ENCODE measurements at regions of chr6 and their contacts with region 1.

Region 1: DNA sequence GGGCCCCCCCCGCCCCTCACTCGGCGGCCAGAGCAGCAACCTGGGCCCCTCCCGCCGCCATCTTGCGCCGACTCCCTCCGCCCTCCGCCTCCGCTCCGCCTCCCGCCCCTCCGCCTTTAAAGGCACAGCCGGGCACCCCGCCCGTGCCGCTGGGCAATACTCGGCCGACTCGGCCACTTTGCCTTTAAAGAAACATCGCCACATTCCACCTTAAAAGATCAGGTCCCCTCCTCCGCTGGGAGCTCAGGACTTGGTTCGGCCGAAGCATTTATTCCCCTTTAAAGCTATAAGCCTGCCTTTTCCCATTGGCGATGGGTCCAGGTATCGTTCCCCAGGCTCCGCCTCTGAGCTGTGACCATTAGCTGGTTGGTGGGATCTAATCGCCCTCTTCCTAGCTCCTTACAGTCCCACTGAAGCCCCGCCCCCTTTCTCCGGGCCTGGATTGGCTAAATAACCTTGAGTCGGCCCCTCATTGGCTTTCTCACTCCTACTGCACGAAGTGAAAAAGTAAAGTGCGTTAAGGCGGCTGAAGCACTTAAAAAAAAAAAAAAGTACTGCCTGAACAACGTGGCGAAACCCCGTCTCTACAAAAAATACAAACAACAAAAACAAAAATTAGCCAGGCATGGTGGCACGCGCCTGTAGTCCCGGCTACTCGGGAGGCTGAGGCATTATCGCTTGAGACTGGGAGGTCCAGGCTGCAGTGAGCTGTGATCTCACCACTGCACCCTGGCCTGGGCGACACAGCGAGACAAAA is at the start of gene ZBTB22:
- DNase-seq: peak; percentile 98
- ATAC-seq: peak; percentile 69
- H3K4me3 Mint-ChIP-seq: peak within 1 kb of the TSS; percentile 80
- H3K27ac Mint-ChIP-seq: peak within 1 kb of the TSS; percentile 93
- H3K4me1 Mint-ChIP-seq: peaks cover 70% of the 10 kb centered on the region
- H3K27me3 Mint-ChIP-seq: no peaks in the 10 kb centered on the region
- total RNA-seq, gene ZBTB22: 9.0 to 9.9 TPM

Region 2: GRCh38 chr6:33276864-33277662 is 40.8 kb before region 1 on chr6 and contains the start of gene B3GALT4:
- CTCF ChIA-PET with region 1: interaction called, 8 read pairs
- POLR2A ChIA-PET with region 1: interaction called, 10 read pairs
- intact Hi-C with region 1: loop called (anchors 1 to 5 kb)
- DNase-seq: peak; percentile 87
- ATAC-seq: peak; percentile 75
- H3K4me3 Mint-ChIP-seq: peak within 1 kb of the TSS; percentile 91
- H3K27ac Mint-ChIP-seq: peak within 1 kb of the TSS; percentile 92
- H3K4me1 Mint-ChIP-seq: peaks cover 39% of the 10 kb centered on the region
- H3K27me3 Mint-ChIP-seq: no peaks in the 10 kb centered on the region
- total RNA-seq, gene B3GALT4: 2.8 to 3.5 TPM

Region 3: GRCh38 chr6:33299237-33299944 is 18.5 kb before region 1 on chr6:
- CTCF ChIA-PET with region 1: interaction called, 13 read pairs
- POLR2A ChIA-PET with region 1: interaction called, 7 read pairs
- intact Hi-C with region 1: loop called in 1 of 2 experiments (anchors 1 kb)
- DNase-seq: peak; percentile 97
- ATAC-seq: peak; percentile 87
- H3K4me3 Mint-ChIP-seq: peak overlapping the region; percentile 80
- H3K27ac Mint-ChIP-seq: peak overlapping the region; percentile 98
- H3K4me1 Mint-ChIP-seq: peaks cover 28% of the 10 kb centered on the region
- H3K27me3 Mint-ChIP-seq: no peaks in the 10 kb centered on the region

Region 4: DNA sequence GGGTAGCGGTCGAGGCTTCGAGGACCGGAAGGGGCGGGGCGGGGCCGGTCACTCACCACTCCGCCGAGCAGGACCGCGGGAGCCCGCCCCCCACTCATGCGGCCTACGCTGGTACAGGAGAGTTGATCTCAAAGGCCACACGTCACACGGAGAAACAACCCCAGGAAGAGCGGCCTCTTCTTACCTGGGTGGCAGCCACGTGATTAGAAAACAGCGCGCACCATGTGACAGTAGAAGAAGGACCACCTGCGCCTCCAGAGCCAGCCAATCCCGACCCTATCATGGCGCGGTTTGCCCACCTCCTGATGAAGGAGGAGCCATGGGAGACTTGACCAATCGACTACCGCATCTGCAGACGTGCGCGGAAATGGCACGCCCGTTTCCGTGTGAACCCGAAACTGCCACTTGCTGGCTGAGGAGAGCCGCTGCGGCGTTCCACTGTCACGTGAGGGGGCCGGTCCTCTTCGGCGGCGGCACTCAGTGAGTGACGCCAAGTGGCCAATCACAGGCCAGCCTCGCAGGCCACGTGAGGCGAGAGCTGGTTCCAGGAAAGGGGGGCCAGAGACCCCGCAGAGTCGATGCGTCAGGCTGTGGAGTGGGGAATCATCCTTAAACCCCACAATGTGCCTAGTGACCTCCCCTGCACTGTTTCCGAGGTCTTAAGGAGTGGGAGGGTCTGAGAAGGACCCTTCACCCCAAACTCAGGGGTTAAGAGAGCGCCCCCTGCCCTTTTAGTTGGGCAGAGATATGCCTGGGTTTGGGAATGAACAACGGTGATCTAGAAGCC is 100.2 kb after region 1 on chr6 and contains the start of gene CUTA:
- CTCF ChIA-PET with region 1: interaction called, 3 read pairs
- POLR2A ChIA-PET with region 1: no interaction called
- intact Hi-C with region 1: loop called (anchors 1 to 2 kb)
- DNase-seq: peak; percentile 100
- ATAC-seq: peak; percentile 87
- H3K4me3 Mint-ChIP-seq: peak within 1 kb of the TSS; percentile 96
- H3K27ac Mint-ChIP-seq: peak within 1 kb of the TSS; percentile 98
- H3K4me1 Mint-ChIP-seq: peaks cover 54% of the 10 kb centered on the region
- H3K27me3 Mint-ChIP-seq: no peaks in the 10 kb centered on the region
- total RNA-seq, gene CUTA: 154 to 188 TPM

Region 5: GRCh38 chr6:33620856-33621710 is 303.2 kb after region 1 on chr6 and contains the start of gene ITPR3:
- CTCF ChIA-PET with region 1: no interaction called
- POLR2A ChIA-PET with region 1: no interaction called
- intact Hi-C with region 1: loop called in 1 of 2 experiments (anchors 5 kb)
- DNase-seq: peak; percentile 86
- ATAC-seq: peak; percentile 85
- H3K4me3 Mint-ChIP-seq: peak within 1 kb of the TSS; percentile 94
- H3K27ac Mint-ChIP-seq: peak within 1 kb of the TSS; percentile 91
- H3K4me1 Mint-ChIP-seq: peaks cover 46% of the 10 kb centered on the region
- H3K27me3 Mint-ChIP-seq: no peaks in the 10 kb centered on the region
- total RNA-seq, gene ITPR3: 42.6 to 42.9 TPM